PC-9 (cell line): ENCODE measurements at regions of chr11 and their contacts with region 1.

Region 1: GRCh38 chr11:63745304-63746170 is 23.0 kb downstream of the ZFTA start:
- DNase-seq: no peak
- H3K4me3 ChIP-seq: no peak overlapping the region
- H3K27ac ChIP-seq: no peak overlapping the region
- H3K4me1 ChIP-seq: no peaks in the 10 kb centered on the region
- H3K27me3 ChIP-seq: no peaks in the 10 kb centered on the region
- CTCF ChIP-seq: peak; percentile 55

Region 2: DNA sequence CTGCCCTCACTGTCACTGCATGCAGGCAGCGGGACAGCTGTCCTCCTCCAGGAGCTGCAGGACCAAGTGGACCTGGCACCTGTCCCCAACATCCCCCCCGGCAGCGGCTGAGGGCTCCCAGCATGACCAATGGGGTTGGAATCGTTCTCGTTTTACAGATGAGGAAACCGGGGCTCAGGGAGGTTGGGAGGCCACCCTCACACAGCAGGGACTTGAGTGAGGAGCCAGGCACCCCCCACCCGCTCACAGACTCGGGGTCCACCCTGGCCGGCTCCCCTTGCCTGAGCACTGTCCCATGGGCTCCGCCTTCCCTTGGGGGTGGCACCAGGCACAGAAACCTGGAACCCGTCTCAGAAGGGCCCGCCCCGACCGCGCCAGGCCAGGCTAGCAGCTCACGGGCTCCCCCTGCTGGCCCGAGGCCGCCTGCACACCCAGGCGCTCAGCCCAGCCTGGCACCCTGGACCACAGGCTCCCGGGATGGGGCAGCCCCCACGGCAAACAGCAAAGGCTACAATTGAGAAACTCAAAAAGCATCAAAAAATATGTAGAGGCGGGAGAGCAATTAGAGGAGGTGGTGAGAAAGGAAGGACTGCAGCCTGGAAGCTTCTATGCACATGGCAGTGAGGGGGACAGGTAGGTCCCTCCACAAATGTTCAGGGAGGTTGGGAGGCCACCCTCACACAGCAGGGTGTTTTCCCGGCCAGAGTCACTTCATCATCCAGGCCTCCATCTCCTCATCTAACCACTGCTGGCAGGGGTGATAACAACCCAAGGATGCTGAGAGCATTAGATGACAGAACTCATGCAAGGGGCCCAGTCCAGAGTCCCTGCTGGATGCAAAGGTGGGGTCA is 407.5 kb after region 1 on chr11:
- CTCF ChIA-PET with region 1: no interaction called
- POLR2A ChIA-PET with region 1: no interaction called
- intact Hi-C with region 1: loop called (anchors 5 kb)
- DNase-seq: peak in 1 of 2 experiments; percentile 78
- H3K4me3 ChIP-seq: no peak overlapping the region
- H3K27ac ChIP-seq: no peak overlapping the region
- H3K4me1 ChIP-seq: no peaks in the 10 kb centered on the region
- H3K27me3 ChIP-seq: no peaks in the 10 kb centered on the region
- CTCF ChIP-seq: peak; percentile 100

Region 3: DNA sequence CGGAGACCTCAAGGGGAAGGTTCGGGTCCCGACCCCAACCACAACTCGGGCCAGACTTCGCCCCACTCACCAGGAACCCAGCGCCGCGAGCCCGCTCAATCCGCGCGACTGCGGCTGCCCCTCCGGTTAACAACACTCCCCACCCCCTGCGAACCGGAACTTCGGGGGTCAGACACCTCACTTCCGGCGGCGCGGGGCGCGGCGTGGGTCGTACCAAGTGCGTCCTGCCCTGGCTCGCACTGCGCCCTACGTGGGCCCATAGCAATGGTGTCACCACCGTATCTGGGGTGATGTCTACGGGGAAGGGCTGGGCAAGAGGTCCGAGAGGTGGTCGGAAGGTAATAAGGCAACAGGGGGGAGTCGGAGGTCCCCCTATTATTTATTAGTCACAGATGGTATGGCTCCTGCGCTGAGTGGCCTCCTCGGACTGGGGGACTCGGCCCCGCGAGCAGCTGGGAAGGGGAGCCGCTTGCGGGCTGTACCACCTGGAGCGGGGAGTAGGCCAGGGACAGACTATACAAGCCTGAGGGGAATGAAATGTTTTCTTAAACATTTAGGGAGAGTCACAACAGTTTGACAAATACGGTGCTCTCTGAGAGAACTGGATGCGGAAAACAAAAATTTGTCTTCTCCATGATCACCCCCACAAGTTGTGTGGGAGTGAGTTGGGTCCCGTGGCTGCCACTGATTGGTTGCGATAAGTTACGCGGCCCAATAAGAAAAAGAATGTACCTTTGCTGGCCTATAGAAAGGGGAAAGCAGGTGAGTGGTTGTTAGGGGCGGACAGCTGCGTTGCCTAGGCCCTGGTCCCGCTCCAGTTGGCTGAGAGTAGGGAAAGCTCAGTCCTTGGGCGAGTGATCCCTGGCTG is 1389.1 kb after region 1 on chr11 and contains the start of gene SYVN1:
- CTCF ChIA-PET with region 1: no interaction called
- POLR2A ChIA-PET with region 1: no interaction called
- intact Hi-C with region 1: no loop called
- DNase-seq: peak; percentile 95 to 99
- H3K4me3 ChIP-seq: peak within 1 kb of the TSS; percentile 92
- H3K27ac ChIP-seq: peak within 1 kb of the TSS; percentile 92
- H3K4me1 ChIP-seq: peaks cover 19% of the 10 kb centered on the region
- H3K27me3 ChIP-seq: no peaks in the 10 kb centered on the region
- CTCF ChIP-seq: no peak
- total RNA-seq, gene SYVN1: 40.9 and 51.5 TPM in 2 replicates